ENCODE measurements at regions of chr17 and their contacts with region 1.

Region 1: DNA sequence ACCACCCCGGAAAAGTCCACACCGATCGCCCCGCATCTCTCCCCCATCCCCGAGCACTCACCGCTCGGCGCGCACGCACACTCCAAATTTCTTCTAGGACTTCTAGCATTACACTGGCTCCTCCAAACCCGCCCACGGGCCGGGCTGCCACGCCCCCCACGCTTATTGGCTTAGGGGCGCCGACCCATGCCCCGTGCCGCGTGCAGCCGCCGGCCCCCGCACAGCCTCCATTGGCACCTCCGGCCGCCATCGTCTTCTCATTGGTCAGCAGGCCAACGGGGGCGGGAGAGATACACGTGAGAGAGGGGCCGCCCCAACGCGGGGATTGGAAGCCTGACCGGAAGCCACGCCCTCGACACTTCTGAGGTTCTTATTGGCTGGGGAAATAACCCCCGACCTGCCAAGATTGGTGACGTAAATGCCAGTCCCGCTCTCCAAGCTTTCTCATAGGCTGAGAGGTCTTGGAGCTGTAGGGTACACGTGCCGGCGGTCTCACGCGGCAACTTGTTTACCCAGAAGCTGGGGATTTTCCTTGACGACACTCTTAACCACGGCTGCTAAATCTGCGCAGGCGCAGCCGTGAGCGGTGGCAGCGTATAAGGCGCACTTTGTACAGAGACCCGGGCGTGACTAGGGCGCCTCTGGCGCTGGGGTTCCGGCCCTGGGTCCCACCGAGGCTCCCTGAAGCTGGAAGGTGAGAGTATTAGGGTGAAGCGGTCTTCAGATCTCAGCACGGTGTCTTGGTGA is 4.2 kb upstream of the PER1 start:
- DNase-seq: peak; percentile 100
- H3K4me3 Mint-ChIP-seq: no peak overlapping the region
- H3K27ac Mint-ChIP-seq: no peak overlapping the region
- H3K4me1 Mint-ChIP-seq: peaks cover 62% of the 10 kb centered on the region
- H3K27me3 Mint-ChIP-seq: no peaks in the 10 kb centered on the region

Region 2: GRCh38 chr17:7931709-7932482 is 224.5 kb before region 1 on chr17 and contains the starts of genes CNTROB and TRAPPC1:
- CTCF ChIA-PET with region 1: no interaction called
- intact Hi-C with region 1: loop called (anchors 1 kb)
- DNase-seq: peak; percentile 100
- H3K4me3 Mint-ChIP-seq: peak within 1 kb of the TSS; percentile 91
- H3K27ac Mint-ChIP-seq: peak within 1 kb of the TSS; percentile 87
- H3K4me1 Mint-ChIP-seq: peaks cover 38% of the 10 kb centered on the region
- H3K27me3 Mint-ChIP-seq: no peaks in the 10 kb centered on the region
- total RNA-seq, gene CNTROB: 49.3 to 56.3 TPM
- total RNA-seq, gene TRAPPC1: 162 to 172 TPM

Region 3: GRCh38 chr17:8091033-8091687 is 65.3 kb before region 1 on chr17:
- CTCF ChIA-PET with region 1: interaction called, 8 read pairs
- intact Hi-C with region 1: loop called (anchors 1 kb)
- DNase-seq: no peak
- H3K4me3 Mint-ChIP-seq: no peak overlapping the region
- H3K27ac Mint-ChIP-seq: no peak overlapping the region
- H3K4me1 Mint-ChIP-seq: peaks cover 8% of the 10 kb centered on the region
- H3K27me3 Mint-ChIP-seq: peaks cover 15% of the 10 kb centered on the region

Region 4: DNA sequence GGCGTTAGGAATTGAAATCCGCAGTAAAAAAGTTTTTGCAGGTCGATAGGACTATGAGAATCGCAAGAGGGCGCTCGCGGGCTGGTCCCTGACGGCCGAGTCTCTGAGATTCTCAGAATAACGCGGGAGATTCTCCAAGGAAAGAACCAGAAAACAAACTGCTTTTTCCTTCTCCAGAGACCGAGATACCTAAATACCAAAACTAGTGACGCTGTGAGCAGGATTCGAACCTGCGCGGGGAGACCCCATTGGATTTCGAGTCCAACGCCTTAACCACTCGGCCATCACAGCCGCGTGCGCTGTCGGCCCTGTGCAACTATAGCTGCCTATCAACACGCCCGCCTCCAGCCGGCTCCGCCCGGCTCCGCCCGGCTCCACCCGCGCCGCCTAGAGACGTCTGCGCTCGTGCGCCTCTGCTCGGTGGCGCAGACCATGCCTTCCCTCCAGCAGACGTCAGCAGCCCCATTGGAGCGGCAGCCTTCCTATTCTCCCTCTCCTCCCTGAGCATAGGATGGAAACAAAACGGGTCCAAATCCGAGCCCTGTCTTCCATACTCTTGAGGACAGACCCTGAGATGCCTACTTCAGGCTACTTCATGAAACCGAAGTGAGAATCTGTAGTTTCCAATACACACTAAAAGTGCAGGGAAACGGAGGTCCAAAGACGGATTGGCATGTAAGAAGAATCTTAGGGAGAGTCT is 17.6 kb before region 1 on chr17:
- CTCF ChIA-PET with region 1: interaction called, 48 read pairs
- intact Hi-C with region 1: loop called (anchors 1 kb)
- DNase-seq: peak; percentile 98
- H3K4me3 Mint-ChIP-seq: no peak overlapping the region
- H3K27ac Mint-ChIP-seq: no peak overlapping the region
- H3K4me1 Mint-ChIP-seq: peaks cover 13% of the 10 kb centered on the region
- H3K27me3 Mint-ChIP-seq: no peaks in the 10 kb centered on the region

Measured in activated naive CD4-positive, alpha-beta T cell treated with anti-CD3 and anti-CD28 coated beads for 36 hours (primary cell).